ENCODE measurements at regions of chr15 and their contacts with region 1.

Region 1: GRCh38 chr15:75809986-75810750 is 33.1 kb upstream of the UBE2Q2 start:
- DNase-seq: peak; percentile 6 to 19 (median 17)
- H3K4me3 ChIP-seq: no peak overlapping the region
- H3K27ac ChIP-seq: no peak overlapping the region
- H3K4me1 ChIP-seq: no peaks in the 10 kb centered on the region
- H3K27me3 ChIP-seq: peaks cover 0 to 4% (median 0%) of the 10 kb centered on the region in 5 experiments

Region 2: GRCh38 chr15:75921729-75922703 is 111.8 kb after region 1 on chr15:
- CTCF ChIA-PET with region 1: interaction called, 54 read pairs
- POLR2A ChIA-PET with region 1: no interaction called
- DNase-seq: peak; percentile 76 to 84 (median 83)
- H3K4me3 ChIP-seq: no peak overlapping the region
- H3K27ac ChIP-seq: no peak overlapping the region
- H3K4me1 ChIP-seq: no peaks in the 10 kb centered on the region
- H3K27me3 ChIP-seq: no peaks in the 10 kb centered on the region